ENCODE measurements at regions of chr1 and their contacts with region 1.

Region 1: DNA sequence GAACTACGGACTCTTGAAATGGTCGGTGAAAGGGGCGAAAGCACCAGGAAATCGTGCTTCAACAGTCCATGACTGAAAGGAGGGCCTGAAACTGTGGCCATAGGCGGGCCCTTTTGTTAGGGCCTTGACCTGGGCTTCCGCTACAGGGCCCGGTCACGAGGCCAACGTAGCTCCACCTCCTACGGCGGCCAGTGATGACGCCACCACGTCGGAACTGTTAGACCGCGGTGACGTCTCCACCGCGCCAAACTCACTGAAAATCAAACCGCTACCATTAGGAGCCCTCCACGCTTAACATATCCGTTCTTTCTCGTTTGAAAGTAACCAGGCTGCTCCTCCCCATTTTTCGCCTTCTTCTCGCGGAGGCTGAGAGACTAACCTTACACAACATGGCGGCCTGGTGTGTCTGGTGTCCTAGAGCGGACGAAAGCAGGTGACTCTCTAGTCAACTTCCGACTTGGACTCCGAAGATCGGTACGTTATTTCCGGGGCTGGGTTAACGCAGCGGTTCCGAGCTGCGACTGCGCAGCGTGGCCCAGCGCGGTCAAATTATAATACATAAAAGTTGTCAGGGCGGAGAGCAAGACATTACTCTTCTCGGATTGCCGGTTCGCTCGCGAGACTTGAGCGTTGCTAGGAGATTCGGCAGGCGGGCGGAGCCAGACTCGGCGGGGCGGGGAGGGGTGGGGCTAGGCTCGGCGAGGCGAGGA is 376 bp upstream of the CACYBP start:
- DNase-seq: peak; percentile 96
- ATAC-seq: peak; percentile 83
- H3K4me3 Mint-ChIP-seq: no peak overlapping the region
- H3K27ac Mint-ChIP-seq: no peak overlapping the region
- H3K4me1 Mint-ChIP-seq: peaks cover 32% of the 10 kb centered on the region
- H3K27me3 Mint-ChIP-seq: no peaks in the 10 kb centered on the region

Region 2: GRCh38 chr1:174800216-174800851 is 199.0 kb before region 1 on chr1:
- POLR2A ChIA-PET with region 1: interaction called, 26 read pairs
- DNase-seq: peak; percentile 39
- ATAC-seq: peak; percentile 6
- H3K4me3 Mint-ChIP-seq: no peak overlapping the region
- H3K27ac Mint-ChIP-seq: no peak overlapping the region
- H3K4me1 Mint-ChIP-seq: peaks cover 4% of the 10 kb centered on the region
- H3K27me3 Mint-ChIP-seq: no peaks in the 10 kb centered on the region

Region 3: DNA sequence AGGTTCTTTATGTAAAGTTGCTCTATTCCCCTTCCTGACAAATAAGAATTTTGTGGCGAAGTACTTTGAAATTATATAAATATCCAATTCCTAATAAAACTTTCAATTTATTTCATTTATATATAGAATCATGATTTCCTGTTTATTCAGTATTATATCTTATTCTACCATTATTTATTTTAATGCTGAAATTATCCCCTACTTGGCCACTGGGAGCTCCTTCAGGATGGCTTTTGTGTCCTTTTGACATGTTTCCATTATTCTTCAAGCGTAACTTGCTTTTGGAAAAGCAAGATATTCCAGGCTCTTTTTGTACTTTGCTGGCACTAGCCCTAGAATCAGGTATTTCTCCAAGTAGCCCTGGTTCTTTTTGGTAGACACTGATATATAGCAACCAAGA is 66.8 kb before region 1 on chr1:
- POLR2A ChIA-PET with region 1: no interaction called
- DNase-seq: no peak
- ATAC-seq: no peak
- H3K4me3 Mint-ChIP-seq: no peak overlapping the region
- H3K27ac Mint-ChIP-seq: no peak overlapping the region
- H3K4me1 Mint-ChIP-seq: no peaks in the 10 kb centered on the region
- H3K27me3 Mint-ChIP-seq: no peaks in the 10 kb centered on the region

Region 4: GRCh38 chr1:174946031-174946430 is 53.3 kb before region 1 on chr1:
- POLR2A ChIA-PET with region 1: no interaction called
- DNase-seq: no peak
- ATAC-seq: no peak
- H3K4me3 Mint-ChIP-seq: no peak overlapping the region
- H3K27ac Mint-ChIP-seq: no peak overlapping the region
- H3K4me1 Mint-ChIP-seq: no peaks in the 10 kb centered on the region
- H3K27me3 Mint-ChIP-seq: peaks cover 2% of the 10 kb centered on the region

Region 5: GRCh38 chr1:174968750-174969244 is 30.6 kb before region 1 on chr1:
- POLR2A ChIA-PET with region 1: interaction called, 72 read pairs
- DNase-seq: no peak
- ATAC-seq: peak; percentile 49
- H3K4me3 Mint-ChIP-seq: peak overlapping the region; percentile 72
- H3K27ac Mint-ChIP-seq: peak overlapping the region; percentile 84
- H3K4me1 Mint-ChIP-seq: peaks cover 63% of the 10 kb centered on the region
- H3K27me3 Mint-ChIP-seq: no peaks in the 10 kb centered on the region

Region 6: DNA sequence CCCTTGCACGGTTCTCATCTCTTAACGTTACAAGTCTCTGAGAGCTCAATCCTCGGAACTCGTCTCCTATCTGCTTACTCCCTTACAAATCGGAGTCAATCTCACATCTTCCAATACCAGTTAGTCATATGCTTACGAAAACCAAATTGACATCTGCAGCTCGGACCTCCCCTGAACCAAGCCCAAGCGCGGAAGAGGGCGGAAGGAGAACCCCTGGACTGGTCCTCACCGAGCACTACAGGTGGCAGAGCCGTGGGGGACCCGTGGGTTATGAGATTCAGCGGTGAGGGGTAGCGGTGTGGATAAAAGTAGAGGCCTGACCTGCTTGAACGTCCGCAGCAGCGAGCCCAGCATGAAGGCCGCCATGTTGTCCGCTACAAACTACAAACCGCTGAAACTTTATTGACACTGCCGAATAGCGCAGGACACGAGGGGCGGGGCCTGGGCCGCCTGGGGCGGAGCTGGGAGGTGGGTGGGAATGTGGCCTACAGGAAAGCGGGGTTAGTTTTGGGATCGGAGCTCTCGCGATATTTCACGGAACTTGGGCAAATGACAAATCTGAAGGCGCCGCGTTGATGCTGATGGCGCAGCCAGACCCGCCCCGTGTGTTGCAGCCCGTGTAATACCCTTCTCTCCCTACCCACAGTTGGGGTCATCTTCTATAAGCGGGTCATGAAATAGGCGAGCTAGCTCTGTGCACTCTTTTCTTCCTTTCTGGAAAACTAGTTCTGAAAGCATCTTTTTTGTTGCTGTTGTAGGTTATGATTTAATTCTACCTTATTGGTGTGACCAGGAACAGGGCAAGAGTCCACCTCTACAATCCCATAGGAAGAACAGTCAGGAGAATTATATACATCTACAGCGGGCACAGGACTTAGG is 23.9 kb after region 1 on chr1 and contains the start of gene MRPS14:
- POLR2A ChIA-PET with region 1: interaction called, 105 read pairs
- DNase-seq: peak; percentile 96
- ATAC-seq: peak; percentile 95
- H3K4me3 Mint-ChIP-seq: peak within 1 kb of the TSS; percentile 93
- H3K27ac Mint-ChIP-seq: peak within 1 kb of the TSS; percentile 93
- H3K4me1 Mint-ChIP-seq: peaks cover 25% of the 10 kb centered on the region
- H3K27me3 Mint-ChIP-seq: no peaks in the 10 kb centered on the region
- total RNA-seq, gene MRPS14: 34.0 to 38.4 TPM